GM10248 (cell line): ENCODE measurements at regions of chr1 and their contacts with region 1.

Region 1: GRCh38 chr1:92858564-92859399 is 26.9 kb downstream of the RPL5 start:
- DNase-seq: peak; percentile 68
- CTCF ChIP-seq: peak; percentile 90

Region 2: GRCh38 chr1:92837062-92837461 is 21.7 kb before region 1 on chr1:
- CTCF ChIA-PET with region 1: interaction called, 16 read pairs
- POLR2A ChIA-PET with region 1: interaction called, 3 read pairs
- DNase-seq: no peak
- CTCF ChIP-seq: no peak

Region 3: GRCh38 chr1:92877792-92878191 is 19.0 kb after region 1 on chr1:
- CTCF ChIA-PET with region 1: interaction called, 50 read pairs
- POLR2A ChIA-PET with region 1: no interaction called
- DNase-seq: peak; percentile 26
- CTCF ChIP-seq: no peak

Region 4: GRCh38 chr1:92913093-92913819 is 54.5 kb after region 1 on chr1:
- CTCF ChIA-PET with region 1: interaction called, 10 read pairs
- POLR2A ChIA-PET with region 1: no interaction called
- DNase-seq: no peak
- CTCF ChIP-seq: no peak

Region 5: DNA sequence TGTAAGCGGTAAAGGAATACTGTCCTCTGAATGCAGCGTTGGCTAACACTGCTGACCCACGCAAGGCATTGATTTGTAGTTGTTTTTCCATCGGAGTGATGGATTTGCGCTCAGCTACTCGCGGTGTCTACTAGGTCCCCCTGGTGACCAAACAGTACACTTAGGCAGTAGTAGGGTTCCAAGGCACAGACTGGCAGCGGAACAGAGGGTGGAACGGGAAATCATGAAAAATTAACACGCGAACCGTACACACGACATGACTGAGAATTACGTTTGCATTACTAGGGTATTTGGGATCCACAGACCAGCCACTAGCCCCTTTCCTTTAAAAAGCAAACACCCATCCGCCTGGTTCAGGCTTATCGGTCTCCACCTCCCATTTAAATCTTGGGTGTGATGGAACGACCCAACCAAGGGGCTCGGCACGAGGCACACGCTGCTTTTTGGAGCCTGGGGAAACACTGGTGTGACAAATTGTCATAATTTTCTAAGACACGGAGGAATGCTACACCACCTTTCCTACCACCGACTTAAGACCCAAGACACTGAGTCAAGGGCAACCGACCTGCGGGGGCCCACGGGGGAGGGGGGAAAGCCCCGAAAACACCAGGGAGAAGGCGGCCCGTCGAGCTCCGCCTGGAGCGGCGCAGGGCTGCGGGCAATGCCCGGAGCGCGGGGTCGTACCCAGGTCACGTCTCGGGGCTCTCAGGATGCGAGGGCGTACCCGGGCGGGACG is 101.8 kb after region 1 on chr1:
- CTCF ChIA-PET with region 1: interaction called, 166 read pairs
- POLR2A ChIA-PET with region 1: no interaction called
- DNase-seq: peak; percentile 73
- CTCF ChIP-seq: peak; percentile 77

Region 6: DNA sequence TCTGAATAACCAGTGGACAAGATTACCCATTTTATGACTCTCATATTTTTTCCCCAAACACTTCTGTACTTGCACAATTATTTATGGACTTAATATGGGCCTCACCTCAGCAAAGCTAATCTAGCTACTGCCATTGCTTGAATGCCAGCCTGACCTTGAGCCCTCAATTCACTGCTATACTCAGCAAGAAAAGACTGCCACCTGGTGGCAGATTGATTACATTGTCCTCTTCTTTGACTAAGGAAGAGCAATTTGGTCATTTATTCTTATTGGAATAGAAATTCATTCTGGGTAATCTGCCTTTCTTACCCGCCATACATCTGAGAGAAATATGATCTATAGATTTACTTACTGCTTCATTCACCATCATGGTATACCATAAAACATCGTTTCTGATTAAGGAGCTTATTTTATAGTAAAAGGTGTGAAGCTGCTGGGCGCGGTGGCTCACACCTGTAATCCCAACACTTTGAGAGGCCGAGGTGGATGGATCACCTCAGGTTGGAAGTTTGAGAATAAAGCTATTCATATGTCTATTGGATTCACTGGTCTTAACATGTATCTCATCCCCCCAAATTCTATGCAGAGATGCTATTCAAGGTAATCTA is 135.4 kb after region 1 on chr1:
- CTCF ChIA-PET with region 1: interaction called, 120 read pairs
- POLR2A ChIA-PET with region 1: no interaction called
- DNase-seq: peak; percentile 65
- CTCF ChIP-seq: peak; percentile 77

Region 7: GRCh38 chr1:93061895-93062792 is 203.4 kb after region 1 on chr1:
- CTCF ChIA-PET with region 1: interaction called, 20 read pairs
- POLR2A ChIA-PET with region 1: no interaction called
- DNase-seq: peak; percentile 57
- CTCF ChIP-seq: peak; percentile 63